BJ (cell line): ENCODE measurements at regions of chrX and their contacts with region 1.

Region 1: DNA sequence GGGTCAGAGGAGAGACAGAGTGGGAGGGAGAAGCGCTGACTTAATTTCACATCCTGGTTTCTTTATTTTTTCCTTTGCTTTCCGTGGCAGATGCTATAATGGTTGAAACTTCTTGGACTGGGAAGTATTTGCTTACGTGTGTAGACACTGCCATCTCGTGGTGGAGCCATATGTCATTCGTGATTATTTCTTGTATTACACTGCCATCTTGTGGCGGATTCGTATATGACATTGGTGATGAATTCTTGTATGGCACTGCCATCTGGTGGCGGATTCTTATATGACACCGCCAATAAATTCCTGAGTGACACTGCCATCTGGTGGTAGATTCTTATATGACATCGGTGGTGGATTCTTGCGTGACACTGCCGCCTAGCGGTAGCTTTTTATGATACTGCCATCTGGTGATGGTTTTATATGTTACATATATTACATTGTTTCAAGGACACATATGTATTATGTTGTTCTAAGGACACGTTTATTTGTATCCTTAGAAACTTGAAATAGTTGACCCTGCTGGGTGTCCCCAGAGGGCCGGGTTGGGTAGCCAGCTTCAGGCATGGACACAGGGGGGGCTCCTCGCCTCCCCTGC is 37.3 kb upstream of the CLCN4 start:
- DNase-seq: no peak
- H3K4me3 ChIP-seq: no peak overlapping the region
- H3K27me3 ChIP-seq: no peaks in the 10 kb centered on the region
- CTCF ChIP-seq: peak; percentile 86

Region 2: GRCh38 chrX:9988762-9989161 is 130.7 kb before region 1 on chrX:
- CTCF ChIA-PET with region 1: interaction called, 41 read pairs
- POLR2A ChIA-PET with region 1: no interaction called
- DNase-seq: no peak
- H3K4me3 ChIP-seq: no peak overlapping the region
- H3K27me3 ChIP-seq: no peaks in the 10 kb centered on the region
- CTCF ChIP-seq: peak; percentile 38; the same call in 1 of the 2 replicates

Region 3: GRCh38 chrX:9995855-9996339 is 123.6 kb before region 1 on chrX:
- CTCF ChIA-PET with region 1: interaction called, 51 read pairs
- POLR2A ChIA-PET with region 1: no interaction called
- DNase-seq: no peak
- H3K4me3 ChIP-seq: no peak overlapping the region
- H3K27me3 ChIP-seq: no peaks in the 10 kb centered on the region
- CTCF ChIP-seq: peak; percentile 88

Region 4: GRCh38 chrX:10011261-10011931 is 108.1 kb before region 1 on chrX:
- CTCF ChIA-PET with region 1: interaction called, 14 read pairs
- POLR2A ChIA-PET with region 1: no interaction called
- DNase-seq: no peak
- H3K4me3 ChIP-seq: no peak overlapping the region
- H3K27me3 ChIP-seq: no peaks in the 10 kb centered on the region
- CTCF ChIP-seq: no peak

Region 5: GRCh38 chrX:10183760-10184159 is 64.3 kb after region 1 on chrX:
- CTCF ChIA-PET with region 1: no interaction called
- POLR2A ChIA-PET with region 1: no interaction called
- DNase-seq: no peak
- H3K4me3 ChIP-seq: no peak overlapping the region
- H3K27me3 ChIP-seq: 0 out of 2 replicates have a peak, but pooled peaks cover 2% of the 10 kb centered on the region
- CTCF ChIP-seq: no peak